ENCODE measurements at regions of chr3 and their contacts with region 1.

Region 1: GRCh38 chr3:184314363-184314699 is at the start of gene EIF4G1:
- DNase-seq: peak; percentile 92
- H3K4me3 Mint-ChIP-seq: peak within 1 kb of the TSS; percentile 88
- H3K27ac Mint-ChIP-seq: peak within 1 kb of the TSS; percentile 93
- H3K4me1 Mint-ChIP-seq: peaks cover 29% of the 10 kb centered on the region
- H3K27me3 Mint-ChIP-seq: no peaks in the 10 kb centered on the region
- total RNA-seq, gene EIF4G1: 657 and 706 TPM in 2 replicates

Region 2: DNA sequence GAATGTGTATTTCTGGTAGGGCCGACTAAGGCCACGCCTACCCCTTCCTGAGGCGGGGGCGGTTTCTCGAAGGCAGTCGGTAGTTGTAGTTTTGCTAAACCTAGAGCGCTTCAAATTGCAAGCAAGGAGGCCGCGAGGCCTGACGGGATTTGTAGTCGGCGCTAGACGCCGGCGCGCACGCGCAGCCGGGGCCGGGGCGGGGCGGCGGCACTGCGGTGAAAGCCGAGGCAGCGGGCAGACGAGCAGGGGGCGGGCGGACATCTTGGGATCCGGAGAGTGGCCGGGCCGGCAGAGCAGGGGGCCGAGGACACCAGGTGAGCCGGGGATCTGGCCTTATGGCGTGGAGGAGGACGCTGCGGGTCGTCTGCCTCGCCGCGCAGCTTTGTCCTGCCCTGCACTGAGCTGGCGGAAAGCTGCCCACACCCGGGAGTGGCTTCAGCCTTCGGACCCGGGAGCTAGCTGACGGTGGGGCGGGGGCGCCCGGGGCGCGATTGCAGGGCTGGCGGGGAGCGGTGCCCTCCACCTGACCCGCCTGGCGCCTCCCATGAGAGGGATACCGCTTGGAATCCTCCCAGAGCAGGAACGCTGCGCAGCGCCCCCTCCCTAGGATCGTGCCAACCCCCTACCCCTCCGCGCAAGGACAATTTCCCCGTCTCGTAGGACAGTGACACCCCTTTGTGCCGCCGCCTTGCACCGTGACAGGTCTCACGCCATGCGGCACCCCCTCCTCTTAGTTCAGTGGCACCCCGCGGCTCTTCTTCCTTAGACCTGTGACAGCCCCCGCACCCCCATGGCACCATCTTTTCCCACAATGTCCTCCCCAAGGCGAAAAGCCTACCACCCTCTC is 139.5 kb before region 1 on chr3 and contains the start of gene AP2M1:
- intact Hi-C with region 1: loop called (anchors 1 kb)
- DNase-seq: peak; percentile 99
- H3K4me3 Mint-ChIP-seq: peak within 1 kb of the TSS; percentile 95
- H3K27ac Mint-ChIP-seq: peak within 1 kb of the TSS; percentile 85
- H3K4me1 Mint-ChIP-seq: peaks cover 28% of the 10 kb centered on the region
- H3K27me3 Mint-ChIP-seq: no peaks in the 10 kb centered on the region
- total RNA-seq, gene AP2M1: 235 and 238 TPM in 2 replicates

Region 3: GRCh38 chr3:184325715-184326369 is 11.5 kb after region 1 on chr3:
- intact Hi-C with region 1: loop called (anchors 1 kb)
- DNase-seq: no peak
- H3K4me3 Mint-ChIP-seq: no peak overlapping the region
- H3K27ac Mint-ChIP-seq: peak overlapping the region; percentile 73
- H3K4me1 Mint-ChIP-seq: peaks cover 22% of the 10 kb centered on the region
- H3K27me3 Mint-ChIP-seq: no peaks in the 10 kb centered on the region

Region 4: DNA sequence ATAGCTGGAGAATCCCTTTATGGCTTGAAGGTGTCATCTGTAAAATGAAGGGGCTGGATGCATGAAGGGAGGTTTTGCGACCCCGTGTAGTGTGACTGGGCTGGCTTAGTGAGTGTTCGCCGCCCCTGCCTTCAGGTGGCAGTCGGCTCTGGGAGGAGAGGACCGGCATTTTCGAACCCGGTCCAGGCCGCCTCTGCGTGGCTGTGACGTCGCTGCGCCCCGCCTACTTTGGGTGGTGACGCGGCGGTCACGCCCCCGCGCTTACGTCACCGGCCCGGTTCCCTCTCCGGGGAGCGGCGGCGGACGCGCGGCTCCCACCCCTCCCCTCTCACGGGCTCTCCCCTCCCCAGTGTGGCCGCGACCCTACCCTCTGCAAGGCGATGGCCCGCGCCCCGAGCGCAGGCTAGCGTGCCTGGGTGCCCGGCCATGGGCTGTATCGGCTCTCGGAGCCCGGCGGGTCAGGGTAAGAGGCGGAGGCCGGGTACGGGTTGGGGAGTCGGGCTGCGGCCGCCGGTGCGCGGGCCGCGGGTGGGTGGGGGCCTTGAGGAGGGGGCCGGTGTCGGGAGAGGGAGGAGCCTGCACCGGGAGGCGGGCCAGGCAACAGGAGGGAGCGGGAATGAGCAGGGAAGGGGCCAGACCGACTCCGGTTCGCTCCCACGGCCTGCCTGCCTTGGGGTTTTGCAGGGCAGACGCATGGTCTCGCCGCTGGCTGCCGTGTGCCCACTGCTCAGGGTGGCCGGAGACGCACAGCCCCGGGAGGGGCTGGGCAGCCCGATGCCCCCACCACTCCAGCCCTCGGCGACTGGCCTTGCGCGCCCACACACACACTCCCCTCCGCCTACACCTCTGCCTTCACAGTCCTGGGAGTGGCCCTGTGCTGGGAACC is 21.6 kb after region 1 on chr3:
- intact Hi-C with region 1: loop called (anchors 1 kb)
- DNase-seq: peak; percentile 84
- H3K4me3 Mint-ChIP-seq: peak overlapping the region; percentile 87
- H3K27ac Mint-ChIP-seq: peak overlapping the region; percentile 92
- H3K4me1 Mint-ChIP-seq: peaks cover 58% of the 10 kb centered on the region
- H3K27me3 Mint-ChIP-seq: peaks cover 2% of the 10 kb centered on the region

Region 5: GRCh38 chr3:184380191-184380626 is 65.9 kb after region 1 on chr3:
- intact Hi-C with region 1: no loop called
- DNase-seq: no peak
- H3K4me3 Mint-ChIP-seq: no peak overlapping the region
- H3K27ac Mint-ChIP-seq: no peak overlapping the region
- H3K4me1 Mint-ChIP-seq: no peaks in the 10 kb centered on the region
- H3K27me3 Mint-ChIP-seq: peaks cover 71% of the 10 kb centered on the region

Region 6: DNA sequence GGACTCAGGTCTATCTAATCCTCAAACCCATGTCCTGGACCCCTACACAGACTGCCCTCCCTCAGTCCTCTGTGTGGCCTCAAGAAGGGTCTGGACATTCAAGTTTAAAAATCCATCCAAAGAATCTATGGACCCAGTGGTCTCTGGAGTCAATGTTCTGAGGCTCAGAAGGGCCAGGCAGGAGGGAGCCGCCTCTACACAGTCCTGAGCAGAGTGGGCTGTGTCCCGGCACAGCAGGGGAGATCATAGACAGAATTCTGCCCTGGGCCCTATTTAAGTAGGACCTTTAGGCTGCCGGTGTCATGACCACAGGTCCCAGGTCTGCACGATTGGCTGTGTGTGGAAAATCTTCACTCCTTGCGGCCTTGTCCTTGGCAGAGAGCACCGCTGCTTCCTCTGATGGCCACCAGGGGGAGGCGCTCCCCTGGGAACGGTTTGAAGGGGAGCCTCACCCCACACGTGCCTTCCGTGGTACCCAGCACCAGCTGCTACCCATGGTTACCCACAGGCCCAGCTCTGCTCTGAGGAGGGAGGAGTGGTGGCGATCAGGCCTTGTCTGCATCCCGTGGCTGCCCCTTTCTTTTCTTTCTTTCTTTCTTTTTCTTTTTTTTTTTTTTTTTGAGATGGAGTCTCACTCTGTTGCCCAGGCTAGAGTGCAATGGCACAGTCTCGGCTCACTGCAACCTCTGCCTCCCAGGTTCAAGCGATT is 103.4 kb after region 1 on chr3:
- intact Hi-C with region 1: no loop called
- DNase-seq: peak; percentile 43
- H3K4me3 Mint-ChIP-seq: no peak overlapping the region
- H3K27ac Mint-ChIP-seq: no peak overlapping the region
- H3K4me1 Mint-ChIP-seq: no peaks in the 10 kb centered on the region
- H3K27me3 Mint-ChIP-seq: peaks cover 5% of the 10 kb centered on the region

Measured in activated T-helper 1 cell treated with anti-CD3 and anti-CD28 coated beads, Interleukin-12 subunit alpha, Interleukin-12 subunit beta, Interleukin-2, Interleukin-4 antibody, amounts not matched to agents 30 ng/mL and 10 ng/mL and 1 ng/mL, durations not matched to agents 14 hours and 24 hours and 36 hours (primary cell).